Activated CD8-positive, alpha-beta T cell treated with anti-CD3 and anti-CD28 coated beads for 36 hours (primary cell): ENCODE measurements at regions of chr3 and their contacts with region 1.

Region 1: DNA sequence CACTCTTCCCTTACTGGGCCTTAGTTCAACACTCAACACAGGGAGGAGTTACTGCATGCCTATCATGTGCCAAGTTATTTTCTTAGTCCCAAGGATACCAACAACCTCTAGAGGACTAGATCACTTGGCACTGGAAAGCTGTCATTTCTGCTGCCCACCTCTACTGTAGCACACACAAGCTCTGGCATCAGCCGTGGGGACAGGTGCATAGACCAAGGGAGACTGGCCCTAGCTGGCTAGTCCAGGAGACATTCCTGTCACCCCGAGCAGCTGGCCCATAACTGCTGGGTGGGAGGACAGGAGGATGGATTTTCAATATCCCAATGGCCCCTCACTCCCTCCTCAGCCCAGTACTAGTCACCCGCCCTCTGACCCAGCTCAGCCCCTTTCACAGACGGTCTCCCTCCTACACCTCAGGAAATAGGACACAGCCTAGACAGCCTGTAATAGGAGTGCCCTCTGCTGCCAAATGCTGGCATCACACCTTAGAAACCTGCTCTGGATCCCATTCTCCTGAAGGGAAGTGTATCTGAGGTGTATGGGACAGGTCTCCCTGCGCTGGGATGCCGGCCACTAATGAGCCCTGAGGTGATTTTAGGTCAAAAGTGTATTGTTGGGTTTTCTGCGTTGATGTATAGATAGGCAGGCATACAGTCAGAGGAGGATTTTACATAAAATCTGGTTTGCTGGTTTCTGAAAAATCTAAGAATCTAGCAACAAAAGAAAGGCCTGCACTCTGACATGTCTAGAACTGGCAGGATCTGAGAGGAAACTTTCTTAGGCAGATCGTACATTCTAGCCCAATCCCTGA is 3.4 kb upstream of the DZIP1L start:
- DNase-seq: peak; percentile 75
- ATAC-seq: peak; percentile 77
- H3K4me3 Mint-ChIP-seq: no peak overlapping the region
- H3K27ac Mint-ChIP-seq: no peak overlapping the region
- H3K4me1 Mint-ChIP-seq: peaks cover 4% of the 10 kb centered on the region
- H3K27me3 Mint-ChIP-seq: peaks cover 30% of the 10 kb centered on the region
- CTCF ChIP-seq: peak; percentile 76

Region 2: GRCh38 chr3:138068579-138069174 is 50.1 kb before region 1 on chr3:
- CTCF ChIA-PET with region 1: interaction called, 181 read pairs
- POLR2A ChIA-PET with region 1: no interaction called
- intact Hi-C with region 1: loop called (anchors 2 kb)
- DNase-seq: peak; percentile 84
- ATAC-seq: peak; percentile 76
- H3K4me3 Mint-ChIP-seq: no peak overlapping the region
- H3K27ac Mint-ChIP-seq: no peak overlapping the region
- H3K4me1 Mint-ChIP-seq: peaks cover 4% of the 10 kb centered on the region
- H3K27me3 Mint-ChIP-seq: peaks cover 10% of the 10 kb centered on the region
- CTCF ChIP-seq: peak; percentile 85

Region 3: GRCh38 chr3:138089091-138089490 is 29.7 kb before region 1 on chr3:
- CTCF ChIA-PET with region 1: interaction called, 27 read pairs
- POLR2A ChIA-PET with region 1: no interaction called
- intact Hi-C with region 1: no loop called
- DNase-seq: no peak
- ATAC-seq: no peak
- H3K4me3 Mint-ChIP-seq: no peak overlapping the region
- H3K27ac Mint-ChIP-seq: no peak overlapping the region
- H3K4me1 Mint-ChIP-seq: no peaks in the 10 kb centered on the region
- H3K27me3 Mint-ChIP-seq: peaks cover 22% of the 10 kb centered on the region
- CTCF ChIP-seq: no peak

Region 4: GRCh38 chr3:138108099-138108498 is 10.7 kb before region 1 on chr3:
- CTCF ChIA-PET with region 1: interaction called, 14 read pairs
- POLR2A ChIA-PET with region 1: no interaction called
- intact Hi-C with region 1: no loop called
- DNase-seq: no peak
- ATAC-seq: no peak
- H3K4me3 Mint-ChIP-seq: no peak overlapping the region
- H3K27ac Mint-ChIP-seq: no peak overlapping the region
- H3K4me1 Mint-ChIP-seq: no peaks in the 10 kb centered on the region
- H3K27me3 Mint-ChIP-seq: peaks cover 9% of the 10 kb centered on the region
- CTCF ChIP-seq: no peak

Region 5: DNA sequence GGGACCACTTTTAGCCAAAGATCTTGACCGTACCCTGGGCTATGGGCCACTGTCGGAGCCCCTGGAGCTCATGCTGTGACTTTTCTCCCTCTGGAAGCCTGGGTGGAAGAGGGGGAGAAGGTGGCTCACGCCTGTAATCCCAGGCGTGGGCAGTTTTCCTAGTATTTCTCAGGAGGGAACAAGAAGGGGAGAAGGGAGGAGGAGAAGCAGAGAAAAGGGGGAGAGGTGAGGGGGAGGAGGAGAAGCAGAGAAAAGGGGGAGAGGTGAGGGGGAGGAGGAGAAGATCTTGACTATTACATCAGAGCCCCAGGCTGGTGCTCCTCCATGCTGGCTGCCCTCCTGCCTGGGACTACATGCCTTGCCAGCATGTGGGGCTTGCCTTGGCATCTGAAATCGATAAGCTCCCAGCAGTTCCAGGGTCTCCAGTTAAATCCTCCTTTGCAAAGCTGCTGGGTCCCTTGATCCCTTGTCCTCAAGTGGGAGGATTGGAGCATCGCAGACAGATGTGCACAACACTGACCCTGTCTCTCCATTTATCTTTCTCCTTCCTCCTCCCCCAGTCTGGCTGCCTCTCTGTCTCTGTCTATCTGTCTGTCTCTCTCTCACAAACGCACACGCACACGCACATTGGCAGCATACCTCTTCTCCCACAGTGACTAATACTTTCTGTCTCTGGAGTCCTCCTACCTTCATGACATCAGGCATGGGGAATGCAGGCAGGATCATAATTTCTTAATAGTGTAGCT is 271.2 kb after region 1 on chr3:
- CTCF ChIA-PET with region 1: no interaction called
- POLR2A ChIA-PET with region 1: no interaction called
- intact Hi-C with region 1: no loop called
- DNase-seq: no peak
- ATAC-seq: no peak
- H3K4me3 Mint-ChIP-seq: no peak overlapping the region
- H3K27ac Mint-ChIP-seq: no peak overlapping the region
- H3K4me1 Mint-ChIP-seq: no peaks in the 10 kb centered on the region
- H3K27me3 Mint-ChIP-seq: no peaks in the 10 kb centered on the region
- CTCF ChIP-seq: no peak